H1 (cell line): ENCODE measurements at regions of chr2 and their contacts with region 1.

Region 1: DNA sequence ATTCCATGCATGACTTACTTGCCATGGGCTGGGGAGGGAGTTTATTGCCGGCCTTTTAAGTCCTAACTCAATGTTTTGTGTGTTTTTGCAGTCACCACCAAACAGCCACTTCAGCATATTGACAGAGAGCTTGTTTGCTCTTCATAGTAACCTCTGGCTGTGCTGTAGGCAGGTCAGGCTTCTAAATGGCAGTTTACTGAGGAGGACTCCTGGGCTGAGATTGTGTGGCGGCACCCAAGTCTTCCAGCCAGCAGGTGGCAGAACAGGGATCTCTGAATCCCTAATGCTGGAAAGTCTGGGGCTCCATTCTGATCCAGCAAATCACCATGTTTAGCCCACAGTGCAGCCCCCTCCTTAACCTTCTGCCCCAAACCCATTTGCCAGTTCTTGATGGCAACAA is 121.2 kb downstream of the CAPN13 start:
- DNase-seq: peak in 1 of 2 experiments; percentile 56
- H3K4me3 ChIP-seq: no peak overlapping the region
- H3K27ac ChIP-seq: no peak overlapping the region
- H3K4me1 ChIP-seq: no peaks in the 10 kb centered on the region
- H3K27me3 ChIP-seq: no peaks in the 10 kb centered on the region
- CTCF ChIP-seq: peak; percentile 47 to 65 (median 58)
- EP300 ChIP-seq: no peak
- POLR2A ChIP-seq: no peak
- RAD21 ChIP-seq: peak; percentile 34 to 48; a peak in 2 of 4 replicates

Region 2: DNA sequence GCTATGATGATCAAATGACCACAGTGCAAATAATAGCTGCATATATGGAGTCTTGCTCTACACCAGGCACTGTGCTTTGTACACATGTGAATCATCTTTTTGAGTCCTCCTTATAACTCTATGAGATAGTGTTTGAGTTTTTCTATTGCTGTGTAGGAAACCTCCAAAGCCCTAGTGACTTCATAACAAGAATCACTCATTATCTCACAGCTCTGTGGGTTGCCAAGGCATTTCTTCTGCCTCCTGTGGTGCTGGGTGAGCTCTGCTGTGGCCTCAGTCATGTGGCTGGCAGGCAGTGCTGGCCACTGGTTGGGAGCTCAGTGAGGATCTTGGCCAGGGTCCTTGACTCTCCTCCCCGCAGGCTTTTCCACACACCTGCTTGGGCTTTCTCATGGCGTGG is 32.2 kb before region 1 on chr2:
- CTCF ChIA-PET with region 1: interaction called, 12 read pairs
- POLR2A ChIA-PET with region 1: no interaction called
- DNase-seq: peak in 1 of 2 experiments; percentile 26
- H3K4me3 ChIP-seq: no peak overlapping the region
- H3K27ac ChIP-seq: no peak overlapping the region
- H3K4me1 ChIP-seq: peaks cover 7 to 11% (median 9%) of the 10 kb centered on the region in 4 experiments; a peak in 6 of 7 replicates
- H3K27me3 ChIP-seq: peaks cover 0 to 6% (median 5%) of the 10 kb centered on the region in 4 experiments; a peak in 4 of 7 replicates
- CTCF ChIP-seq: no peak
- EP300 ChIP-seq: no peak
- POLR2A ChIP-seq: no peak
- RAD21 ChIP-seq: no peak

Region 3: GRCh38 chr2:30662268-30663131 is 23.5 kb before region 1 on chr2:
- CTCF ChIA-PET with region 1: interaction called, 11 read pairs
- POLR2A ChIA-PET with region 1: no interaction called
- DNase-seq: peak in 1 of 2 experiments; percentile 16
- H3K4me3 ChIP-seq: no peak overlapping the region
- H3K27ac ChIP-seq: no peak overlapping the region
- H3K4me1 ChIP-seq: no peaks in the 10 kb centered on the region
- H3K27me3 ChIP-seq: 0 out of 7 replicates have a peak, but pooled peaks cover 0 to 2% (median 0%) of the 10 kb centered on the region in 4 experiments
- CTCF ChIP-seq: no peak
- EP300 ChIP-seq: no peak
- POLR2A ChIP-seq: no peak
- RAD21 ChIP-seq: no peak